Kidney (tissue), 22 donors: ENCODE measurements at regions of chr2 and their contacts with region 1.

Region 1: GRCh38 chr2:66439812-66440542 is 5.1 kb downstream of the MEIS1 start:
- DNase-seq: peak; percentile 36 to 72 (median 59)
- H3K4me3 ChIP-seq: peak overlapping the region; percentile 80 to 93 (median 91)
- H3K27ac ChIP-seq: peak overlapping the region; percentile 35 to 81
- H3K4me1 ChIP-seq: no peaks in the 10 kb centered on the region
- H3K27me3 ChIP-seq: peaks cover 9% of the 10 kb centered on the region
- CTCF ChIP-seq: no peak

Region 2: GRCh38 chr2:66030553-66030952 is 409.4 kb before region 1 on chr2:
- intact Hi-C with region 1: no loop called
- DNase-seq: peak in 1 of 5 donors; percentile 28
- H3K4me3 ChIP-seq: no peak overlapping the region
- H3K27ac ChIP-seq: no peak overlapping the region
- H3K4me1 ChIP-seq: no peaks in the 10 kb centered on the region
- H3K27me3 ChIP-seq: no peaks in the 10 kb centered on the region
- CTCF ChIP-seq: no peak

Region 3: GRCh38 chr2:66581339-66582103 is 141.5 kb after region 1 on chr2:
- intact Hi-C with region 1: loop called (anchors 5 kb)
- DNase-seq: peak; percentile 63 to 84 (median 78)
- H3K4me3 ChIP-seq: peak overlapping the region in 2 of 3 donors; percentile 20 to 64
- H3K27ac ChIP-seq: peak overlapping the region; percentile 88 to 93
- H3K4me1 ChIP-seq: peaks cover 0 to 3% (median 2%) of the 10 kb centered on the region in 3 donors
- H3K27me3 ChIP-seq: peaks cover 30% of the 10 kb centered on the region
- CTCF ChIP-seq: no peak

Region 4: GRCh38 chr2:66691031-66691507 is 251.1 kb after region 1 on chr2:
- intact Hi-C with region 1: loop called (anchors 5 kb)
- DNase-seq: peak in 2 of 5 donors; percentile 85
- H3K4me3 ChIP-seq: peak overlapping the region in 2 of 3 donors; percentile 40 to 67
- H3K27ac ChIP-seq: peak overlapping the region; percentile 13 to 41
- H3K4me1 ChIP-seq: peaks cover 0 to 3% (median 0%) of the 10 kb centered on the region in 3 donors
- H3K27me3 ChIP-seq: no peaks in the 10 kb centered on the region
- CTCF ChIP-seq: no peak

Region 5: DNA sequence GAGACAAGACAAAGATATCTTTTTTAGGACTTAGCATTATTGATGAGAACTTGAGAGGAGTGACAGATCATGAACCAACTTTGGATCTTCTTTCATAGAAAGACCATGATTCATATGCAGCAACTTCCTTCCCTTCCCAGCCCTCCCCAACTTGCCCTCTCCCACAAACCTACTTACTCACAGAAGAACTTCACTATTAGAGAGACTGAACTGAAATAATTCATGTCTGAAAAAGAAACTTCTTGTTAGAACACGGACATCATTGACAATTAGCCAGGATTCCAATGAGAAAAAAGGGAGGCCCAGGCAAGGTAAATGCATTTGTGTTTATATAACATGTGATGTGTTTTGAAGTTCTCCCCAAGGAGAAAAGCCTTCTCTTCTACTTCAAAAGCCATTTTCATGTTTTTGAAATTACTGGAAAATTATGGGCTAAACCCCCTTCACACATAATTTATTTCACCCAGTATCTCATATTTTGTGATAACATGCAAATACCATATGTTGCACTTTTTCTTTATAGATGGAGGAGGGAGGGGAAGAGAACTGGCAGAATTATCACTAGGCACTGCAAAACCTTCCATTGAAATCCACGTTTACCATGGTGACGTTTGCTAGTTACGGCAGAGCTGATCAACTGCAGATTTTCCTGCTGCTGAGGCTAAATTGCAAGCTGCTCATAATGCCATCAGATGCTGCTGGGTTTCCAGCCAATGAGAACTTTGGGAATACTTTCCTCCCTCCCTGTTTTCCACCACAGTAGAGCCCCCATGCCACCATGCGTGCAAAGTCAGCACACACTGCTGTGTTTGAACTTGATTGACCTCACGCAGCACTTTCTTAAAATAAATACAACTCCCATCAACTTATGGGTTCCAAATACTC is 289.7 kb after region 1 on chr2:
- intact Hi-C with region 1: no loop called
- DNase-seq: peak in 1 of 5 donors; percentile 16
- H3K4me3 ChIP-seq: no peak overlapping the region
- H3K27ac ChIP-seq: no peak overlapping the region
- H3K4me1 ChIP-seq: no peaks in the 10 kb centered on the region
- H3K27me3 ChIP-seq: no peaks in the 10 kb centered on the region
- CTCF ChIP-seq: no peak